Endothelial cell of umbilical vein (primary cell): ENCODE measurements at regions of chr10 and their contacts with region 1.

Region 1: DNA sequence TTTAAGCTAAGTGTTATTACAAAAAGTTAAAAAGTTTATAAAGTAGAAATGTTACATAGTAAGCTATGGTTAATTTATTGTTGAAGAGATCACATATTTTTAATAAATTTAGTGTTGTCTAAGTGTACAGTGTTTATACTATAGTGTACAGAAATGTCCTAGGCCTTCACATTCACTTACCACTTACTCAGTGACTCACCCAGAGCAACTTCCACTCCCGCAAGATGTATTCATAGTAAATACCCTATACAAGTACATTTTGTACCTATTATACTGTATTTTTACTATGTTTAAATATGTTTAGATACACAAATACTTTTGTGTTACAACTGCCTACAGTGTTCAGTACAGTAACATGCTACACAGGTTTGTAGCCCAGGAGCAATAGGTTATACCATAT is 69.2 kb downstream of the DNAJC1 start:
- DNase-seq: no peak
- H3K4me3 ChIP-seq: no peak overlapping the region
- H3K27ac ChIP-seq: no peak overlapping the region
- H3K4me1 ChIP-seq: no peaks in the 10 kb centered on the region
- H3K27me3 ChIP-seq: no peaks in the 10 kb centered on the region
- CTCF ChIP-seq: no peak
- POLR2A ChIP-seq: no peak

Region 2: DNA sequence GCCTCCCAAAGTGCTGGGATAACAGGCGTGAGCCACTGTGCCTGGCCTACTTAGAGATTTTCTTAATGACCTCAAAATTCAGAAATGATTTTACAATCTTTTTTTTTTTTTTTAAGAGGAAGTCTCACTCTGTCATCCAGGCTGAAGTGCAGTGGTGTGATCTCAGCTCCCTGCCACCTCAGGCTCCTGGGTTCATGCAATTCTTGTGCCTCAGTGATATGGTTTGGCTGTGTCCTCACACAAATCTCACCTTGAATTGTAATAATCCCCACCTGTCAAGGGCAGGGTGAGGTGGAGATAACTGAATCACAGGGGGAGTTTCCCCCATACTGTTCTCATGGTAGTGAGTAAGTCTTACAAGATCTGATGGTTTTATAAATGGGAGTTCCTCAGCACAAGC is 90.7 kb before region 1 on chr10:
- CTCF ChIA-PET with region 1: no interaction called
- POLR2A ChIA-PET with region 1: no interaction called
- dilution Hi-C with region 1: no loop called
- intact Hi-C with region 1: no loop called
- DNase-seq: no peak
- H3K4me3 ChIP-seq: no peak overlapping the region
- H3K27ac ChIP-seq: no peak overlapping the region
- H3K4me1 ChIP-seq: no peaks in the 10 kb centered on the region
- H3K27me3 ChIP-seq: no peaks in the 10 kb centered on the region
- CTCF ChIP-seq: no peak
- POLR2A ChIP-seq: no peak

Region 3: GRCh38 chr10:21953585-21954057 is 19.3 kb after region 1 on chr10:
- CTCF ChIA-PET with region 1: interaction called, 12 read pairs
- POLR2A ChIA-PET with region 1: no interaction called
- dilution Hi-C with region 1: no loop called
- intact Hi-C with region 1: no loop called
- DNase-seq: peak; percentile 70
- H3K4me3 ChIP-seq: no peak overlapping the region
- H3K27ac ChIP-seq: no peak overlapping the region
- H3K4me1 ChIP-seq: no peaks in the 10 kb centered on the region
- H3K27me3 ChIP-seq: no peaks in the 10 kb centered on the region
- CTCF ChIP-seq: peak in 1 of 2 donors; percentile 9
- POLR2A ChIP-seq: no peak